Activated CD8-positive, alpha-beta memory T cell treated with anti-CD3 and anti-CD28 coated beads, Interleukin-2, amount 10 ng/mL, durations not matched to agents 7 days and 5 days (primary cell): ENCODE measurements at regions of chr11 and their contacts with region 1.

Region 1: DNA sequence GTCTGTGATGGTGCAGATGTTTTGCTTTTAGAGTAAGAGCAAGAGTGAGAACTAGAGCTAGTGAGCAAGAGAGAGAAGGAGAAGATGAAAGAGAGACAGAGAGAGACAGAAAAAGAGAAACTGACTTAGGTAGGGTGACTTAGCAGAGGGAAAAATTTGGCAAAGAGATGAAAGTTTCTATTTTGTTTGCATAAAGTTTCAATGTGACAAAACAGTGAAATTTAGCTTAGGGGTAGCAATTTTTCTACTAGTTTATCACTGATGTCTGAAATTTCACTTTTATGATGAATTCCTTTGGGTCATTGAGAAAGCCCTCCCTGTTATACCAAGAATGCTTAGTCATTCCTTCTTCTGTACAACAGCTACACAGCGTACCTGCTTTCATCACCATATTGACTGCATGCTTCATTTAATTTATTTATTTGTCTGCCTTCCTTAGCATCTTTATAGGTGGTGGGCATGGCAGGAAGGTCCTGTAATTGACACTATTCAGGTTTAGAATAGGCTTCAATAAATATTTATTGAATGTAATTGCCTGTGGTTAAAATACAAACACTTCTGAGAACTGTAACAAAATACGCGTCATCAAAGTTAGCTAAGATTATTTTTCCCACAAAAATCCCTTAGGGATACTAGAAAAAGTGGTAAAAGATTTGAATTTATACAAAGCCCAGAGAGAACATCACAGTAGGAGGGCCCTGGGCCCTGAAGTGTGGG is 19.9 kb upstream of the CTSC start:
- DNase-seq: no peak
- ATAC-seq: peak; percentile 64
- H3K4me3 Mint-ChIP-seq: peak overlapping the region; percentile 68
- H3K27ac Mint-ChIP-seq: peak overlapping the region; percentile 97
- H3K4me1 Mint-ChIP-seq: peaks cover 60% of the 10 kb centered on the region
- H3K27me3 Mint-ChIP-seq: no peaks in the 10 kb centered on the region

Region 2: GRCh38 chr11:88337181-88337986 is 20.1 kb before region 1 on chr11 and contains the start of gene CTSC:
- CTCF ChIA-PET with region 1: interaction called, 44 read pairs
- DNase-seq: peak; percentile 98
- ATAC-seq: peak; percentile 89
- H3K4me3 Mint-ChIP-seq: peak within 1 kb of the TSS; percentile 93
- H3K27ac Mint-ChIP-seq: peak within 1 kb of the TSS; percentile 95
- H3K4me1 Mint-ChIP-seq: peaks cover 58% of the 10 kb centered on the region
- H3K27me3 Mint-ChIP-seq: no peaks in the 10 kb centered on the region
- total RNA-seq, gene CTSC: 287 to 292 TPM